ENCODE measurements at regions of chr9 and their contacts with region 1.

Region 1: GRCh38 chr9:112898872-112899311 is 8.2 kb upstream of the SLC46A2 start:
- DNase-seq: no peak
- H3K4me3 Mint-ChIP-seq: no peak overlapping the region
- H3K27ac Mint-ChIP-seq: no peak overlapping the region
- H3K4me1 Mint-ChIP-seq: peaks cover 4% of the 10 kb centered on the region
- H3K27me3 Mint-ChIP-seq: peaks cover 36% of the 10 kb centered on the region

Region 2: GRCh38 chr9:112839331-112839730 is 59.6 kb before region 1 on chr9:
- CTCF ChIA-PET with region 1: interaction called, 88 read pairs
- intact Hi-C with region 1: loop called (anchors 1 kb)
- DNase-seq: no peak
- H3K4me3 Mint-ChIP-seq: no peak overlapping the region
- H3K27ac Mint-ChIP-seq: no peak overlapping the region
- H3K4me1 Mint-ChIP-seq: no peaks in the 10 kb centered on the region
- H3K27me3 Mint-ChIP-seq: no peaks in the 10 kb centered on the region

Region 3: DNA sequence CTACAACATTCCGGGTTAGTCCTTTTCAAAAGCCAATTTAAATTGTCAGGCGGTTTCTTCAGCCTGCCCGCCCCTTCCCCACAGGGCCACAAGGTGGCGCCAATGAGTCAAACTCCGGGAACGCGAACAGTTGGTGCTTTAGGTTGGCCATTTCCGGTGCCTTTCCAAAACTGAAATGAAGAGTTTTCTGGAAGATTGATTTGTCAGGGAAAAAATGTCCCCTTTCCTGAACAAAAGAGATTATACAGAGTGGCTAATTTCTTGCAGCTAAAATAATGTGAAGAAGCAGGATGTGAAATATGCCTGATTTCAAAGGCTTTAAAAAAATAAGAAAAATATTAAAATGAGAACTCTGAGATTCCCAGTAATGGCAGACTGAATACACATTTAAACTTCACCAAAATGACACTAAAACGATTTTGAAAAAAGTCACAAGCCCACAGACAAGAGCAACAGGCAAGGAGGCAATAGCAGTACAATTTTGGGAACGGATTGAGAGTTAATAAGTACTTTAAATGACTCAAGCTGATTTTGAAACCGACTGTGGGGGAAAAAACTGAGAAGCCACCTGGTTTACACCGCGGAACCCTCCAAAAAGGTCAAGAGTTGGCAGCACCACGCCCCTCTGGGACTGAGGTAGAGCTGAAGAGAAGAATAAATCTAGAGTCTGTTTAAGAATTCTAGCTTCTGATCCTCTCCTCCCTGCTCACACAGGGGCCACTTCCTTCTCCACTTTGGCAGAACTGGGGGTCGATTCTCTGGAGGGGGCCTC is 53.9 kb before region 1 on chr9:
- CTCF ChIA-PET with region 1: interaction called, 88 read pairs
- intact Hi-C with region 1: loop called (anchors 1 kb)
- DNase-seq: peak; percentile 86
- H3K4me3 Mint-ChIP-seq: no peak overlapping the region
- H3K27ac Mint-ChIP-seq: no peak overlapping the region
- H3K4me1 Mint-ChIP-seq: peaks cover 8% of the 10 kb centered on the region
- H3K27me3 Mint-ChIP-seq: no peaks in the 10 kb centered on the region

Region 4: DNA sequence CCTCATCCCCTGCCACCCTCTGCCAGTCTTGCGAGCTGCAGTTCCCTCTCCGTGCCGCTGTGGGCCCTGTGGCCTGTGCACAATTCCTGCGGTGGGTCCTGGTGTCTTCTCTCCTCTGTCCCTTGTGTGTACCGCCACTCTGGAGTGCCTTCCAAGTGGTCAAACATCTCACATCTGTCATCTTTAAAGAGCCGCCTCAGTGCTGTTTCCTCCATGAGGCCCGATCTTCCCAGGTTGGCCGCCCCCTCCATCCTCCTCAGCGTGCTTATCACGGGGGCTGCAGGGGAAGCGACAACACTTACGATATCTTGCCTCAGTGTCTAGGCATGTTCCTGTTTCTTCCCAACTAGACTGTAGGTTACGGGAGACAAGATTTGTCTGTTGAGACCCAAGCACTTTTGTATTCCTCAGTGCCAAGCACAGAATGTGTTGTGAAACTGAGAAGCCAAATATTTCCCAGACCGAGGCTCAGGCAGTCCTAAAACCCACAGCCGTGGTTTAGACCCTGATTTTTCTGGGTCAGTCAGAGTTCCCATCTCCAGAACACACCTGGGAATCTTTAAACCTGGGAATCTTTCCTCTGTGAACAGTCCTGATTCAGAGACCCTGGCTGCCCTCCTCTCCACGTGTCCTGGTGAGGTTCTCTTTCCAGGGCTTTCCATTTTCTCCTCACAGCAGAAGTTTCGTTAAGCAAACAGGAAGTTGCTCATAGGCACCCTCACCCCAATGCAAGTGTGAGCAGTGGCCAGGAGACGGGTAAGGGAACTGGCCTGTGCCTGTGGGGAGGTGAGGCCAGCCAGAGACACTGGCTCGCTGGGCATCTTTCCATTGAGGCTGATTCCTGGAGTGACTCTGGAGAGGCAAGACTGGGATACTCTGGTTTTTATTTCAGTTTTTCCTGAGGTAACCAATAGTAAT is 37.0 kb before region 1 on chr9:
- CTCF ChIA-PET with region 1: interaction called, 17 read pairs
- intact Hi-C with region 1: loop called (anchors 1 kb)
- DNase-seq: no peak
- H3K4me3 Mint-ChIP-seq: no peak overlapping the region
- H3K27ac Mint-ChIP-seq: no peak overlapping the region
- H3K4me1 Mint-ChIP-seq: peaks cover 18% of the 10 kb centered on the region
- H3K27me3 Mint-ChIP-seq: no peaks in the 10 kb centered on the region

Region 5: GRCh38 chr9:112881366-112881765 is 17.5 kb before region 1 on chr9:
- CTCF ChIA-PET with region 1: interaction called, 15 read pairs
- intact Hi-C with region 1: no loop called
- DNase-seq: no peak
- H3K4me3 Mint-ChIP-seq: no peak overlapping the region
- H3K27ac Mint-ChIP-seq: no peak overlapping the region
- H3K4me1 Mint-ChIP-seq: no peaks in the 10 kb centered on the region
- H3K27me3 Mint-ChIP-seq: no peaks in the 10 kb centered on the region

Region 6: DNA sequence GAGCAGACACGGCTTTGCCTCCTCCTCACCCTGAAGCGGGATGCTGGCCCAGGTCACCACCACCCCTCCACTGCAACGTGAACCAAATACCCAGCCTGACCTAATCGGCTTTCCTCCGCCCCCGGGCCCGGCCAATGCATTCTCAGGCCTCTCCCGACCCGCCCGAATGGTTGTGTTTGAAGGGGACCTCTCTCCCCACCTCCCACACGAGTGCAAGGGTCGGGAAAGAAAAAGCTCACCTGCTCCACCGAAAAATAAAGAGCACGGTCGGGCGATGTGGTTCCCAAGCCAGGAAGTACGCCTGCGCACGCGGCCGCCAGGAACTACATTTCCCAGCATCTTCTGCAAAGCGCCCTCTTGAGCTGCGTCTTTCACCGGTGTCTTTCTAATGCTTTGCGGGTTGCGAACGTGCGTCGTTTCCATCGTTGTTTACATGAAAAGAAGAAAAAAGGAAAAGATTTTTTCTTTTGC is 113.1 kb after region 1 on chr9 and contains the start of gene ZNF883:
- CTCF ChIA-PET with region 1: no interaction called
- intact Hi-C with region 1: no loop called
- DNase-seq: peak; percentile 37
- H3K4me3 Mint-ChIP-seq: peak within 1 kb of the TSS; percentile 58
- H3K27ac Mint-ChIP-seq: no peak within 1 kb of the TSS
- H3K4me1 Mint-ChIP-seq: peaks cover 3% of the 10 kb centered on the region
- H3K27me3 Mint-ChIP-seq: peaks cover 22% of the 10 kb centered on the region
- total RNA-seq, gene ZNF883: 0.44 to 0.60 TPM

Region 7: GRCh38 chr9:113401027-113401792 is 502.3 kb after region 1 on chr9 and contains the start of gene ALAD:
- CTCF ChIA-PET with region 1: no interaction called
- intact Hi-C with region 1: no loop called
- DNase-seq: peak; percentile 99
- H3K4me3 Mint-ChIP-seq: peak within 1 kb of the TSS; percentile 93
- H3K27ac Mint-ChIP-seq: no peak within 1 kb of the TSS
- H3K4me1 Mint-ChIP-seq: peaks cover 20% of the 10 kb centered on the region
- H3K27me3 Mint-ChIP-seq: no peaks in the 10 kb centered on the region
- total RNA-seq, gene ALAD: 16.1 to 17.7 TPM